Caco-2 (cell line): ENCODE measurements at regions of chr10 and their contacts with region 1.

Region 1: GRCh38 chr10:5684318-5684970 is at the start of gene TASOR2:
- DNase-seq: peak; percentile 100
- H3K4me3 ChIP-seq: peak within 1 kb of the TSS; percentile 97
- H3K4me3 Mint-ChIP-seq: peak within 1 kb of the TSS; percentile 86
- H3K27ac Mint-ChIP-seq: peak within 1 kb of the TSS; percentile 96
- H3K4me1 ChIP-seq: peaks cover 12% of the 10 kb centered on the region
- H3K4me1 Mint-ChIP-seq: peaks cover 12% of the 10 kb centered on the region
- H3K27me3 ChIP-seq: no peaks in the 10 kb centered on the region
- H3K27me3 Mint-ChIP-seq: no peaks in the 10 kb centered on the region
- CTCF ChIP-seq: no peak
- total RNA-seq, gene TASOR2: 102 and 108 TPM in 2 replicates

Region 2: GRCh38 chr10:5551531-5552375 is 132.7 kb before region 1 on chr10:
- CTCF ChIA-PET with region 1: no interaction called
- POLR2A ChIA-PET with region 1: no interaction called
- intact Hi-C with region 1: no loop called
- DNase-seq: peak in 1 of 2 experiments; percentile 44
- H3K4me3 ChIP-seq: no peak overlapping the region
- H3K4me3 Mint-ChIP-seq: no peak overlapping the region
- H3K27ac Mint-ChIP-seq: no peak overlapping the region
- H3K4me1 ChIP-seq: peaks cover 67% of the 10 kb centered on the region
- H3K4me1 Mint-ChIP-seq: peaks cover 28% of the 10 kb centered on the region
- H3K27me3 ChIP-seq: no peaks in the 10 kb centered on the region
- H3K27me3 Mint-ChIP-seq: no peaks in the 10 kb centered on the region
- CTCF ChIP-seq: no peak

Region 3: GRCh38 chr10:5629303-5630111 is 54.9 kb before region 1 on chr10:
- CTCF ChIA-PET with region 1: interaction called, 7 read pairs
- POLR2A ChIA-PET with region 1: no interaction called
- intact Hi-C with region 1: loop called (anchors 1 kb)
- DNase-seq: peak; percentile 86 to 92
- H3K4me3 ChIP-seq: no peak overlapping the region
- H3K4me3 Mint-ChIP-seq: no peak overlapping the region
- H3K27ac Mint-ChIP-seq: no peak overlapping the region
- H3K4me1 ChIP-seq: peaks cover 21% of the 10 kb centered on the region
- H3K4me1 Mint-ChIP-seq: peaks cover 25% of the 10 kb centered on the region
- H3K27me3 ChIP-seq: no peaks in the 10 kb centered on the region
- H3K27me3 Mint-ChIP-seq: no peaks in the 10 kb centered on the region
- CTCF ChIP-seq: peak; percentile 97 to 98

Region 4: GRCh38 chr10:5666008-5666829 is 18.2 kb before region 1 on chr10 and contains the start of gene ASB13:
- CTCF ChIA-PET with region 1: no interaction called
- POLR2A ChIA-PET with region 1: no interaction called
- intact Hi-C with region 1: loop called (anchors 2 kb)
- DNase-seq: peak; percentile 77 to 89
- H3K4me3 ChIP-seq: peak within 1 kb of the TSS; percentile 100
- H3K4me3 Mint-ChIP-seq: peak within 1 kb of the TSS; percentile 86
- H3K27ac Mint-ChIP-seq: peak within 1 kb of the TSS; percentile 72
- H3K4me1 ChIP-seq: peaks cover 21% of the 10 kb centered on the region
- H3K4me1 Mint-ChIP-seq: peaks cover 6% of the 10 kb centered on the region
- H3K27me3 ChIP-seq: no peaks in the 10 kb centered on the region
- H3K27me3 Mint-ChIP-seq: no peaks in the 10 kb centered on the region
- CTCF ChIP-seq: peak in 1 of 2 experiments; percentile 33
- total RNA-seq, gene ASB13: 37.0 and 44.8 TPM in 2 replicates

Region 5: DNA sequence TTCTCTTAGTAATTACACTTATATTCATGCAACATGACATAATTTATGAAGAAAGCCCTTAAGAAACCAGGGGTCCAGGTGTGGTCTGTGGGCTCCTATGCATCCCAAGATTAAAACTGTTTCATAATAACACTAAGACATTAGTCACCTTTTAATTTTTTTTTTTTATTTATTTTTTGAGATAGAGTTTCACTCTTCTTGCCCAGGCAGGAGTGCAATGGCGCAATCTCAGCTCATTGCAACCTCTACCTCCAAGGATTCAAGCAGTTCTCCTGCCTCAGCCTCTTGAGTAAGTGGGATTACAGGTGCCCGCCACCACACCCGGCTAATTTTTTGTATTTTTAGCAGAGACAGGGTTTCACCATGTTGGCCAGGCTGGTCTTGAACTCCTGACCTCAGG is 116.3 kb after region 1 on chr10:
- CTCF ChIA-PET with region 1: no interaction called
- POLR2A ChIA-PET with region 1: no interaction called
- intact Hi-C with region 1: no loop called
- DNase-seq: no peak
- H3K4me3 ChIP-seq: no peak overlapping the region
- H3K4me3 Mint-ChIP-seq: no peak overlapping the region
- H3K27ac Mint-ChIP-seq: no peak overlapping the region
- H3K4me1 ChIP-seq: no peaks in the 10 kb centered on the region
- H3K4me1 Mint-ChIP-seq: peaks cover 6% of the 10 kb centered on the region
- H3K27me3 ChIP-seq: no peaks in the 10 kb centered on the region
- H3K27me3 Mint-ChIP-seq: no peaks in the 10 kb centered on the region
- CTCF ChIP-seq: no peak

Region 6: DNA sequence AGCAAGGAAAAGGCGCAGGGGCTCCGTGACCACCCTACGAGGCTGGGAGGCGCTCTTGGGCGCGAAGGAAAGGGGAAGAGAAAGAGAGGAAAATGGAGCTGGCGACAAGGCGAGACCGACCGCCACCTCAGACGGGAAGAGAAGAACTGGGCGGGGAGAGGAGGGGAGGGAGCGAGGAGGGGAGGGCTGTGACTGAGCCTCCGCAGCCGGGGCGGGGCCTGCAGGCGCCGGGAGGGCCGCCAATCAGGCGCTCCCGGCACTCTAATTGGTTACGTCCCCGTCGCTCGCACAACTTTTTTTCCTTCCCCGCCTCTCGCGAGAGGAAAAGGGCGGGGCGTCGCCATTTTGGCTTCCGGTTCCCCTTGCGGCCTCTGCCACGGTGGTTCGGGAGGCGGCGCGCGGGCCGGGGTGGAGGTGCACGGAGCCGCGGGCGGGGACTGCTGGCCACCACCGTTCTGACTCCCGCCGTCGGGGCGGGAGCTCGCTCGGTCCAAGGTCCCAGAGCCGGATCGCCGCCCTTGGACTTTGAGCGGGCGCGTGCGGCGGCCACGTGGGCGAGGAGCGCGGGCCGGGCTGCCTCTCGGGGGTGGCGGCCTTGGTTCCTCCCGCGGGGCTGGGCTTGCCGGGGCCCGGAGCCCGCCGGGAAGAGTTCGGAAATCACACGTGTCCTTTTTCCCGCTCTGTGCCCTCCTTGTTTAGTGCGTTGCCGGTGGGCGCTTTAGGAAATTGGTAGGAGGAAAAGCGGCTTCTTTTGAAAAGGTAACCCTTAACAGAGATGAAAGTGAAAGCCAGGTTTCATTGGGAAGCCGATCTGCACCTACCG is 129.1 kb after region 1 on chr10 and contains the start of gene GDI2:
- CTCF ChIA-PET with region 1: no interaction called
- POLR2A ChIA-PET with region 1: interaction called, 5 read pairs
- intact Hi-C with region 1: loop called (anchors 2 kb)
- DNase-seq: peak; percentile 99 to 100
- H3K4me3 ChIP-seq: peak within 1 kb of the TSS; percentile 90
- H3K4me3 Mint-ChIP-seq: peak within 1 kb of the TSS; percentile 91
- H3K27ac Mint-ChIP-seq: peak within 1 kb of the TSS; percentile 87
- H3K4me1 ChIP-seq: peaks cover 35% of the 10 kb centered on the region
- H3K4me1 Mint-ChIP-seq: peaks cover 28% of the 10 kb centered on the region
- H3K27me3 ChIP-seq: no peaks in the 10 kb centered on the region
- H3K27me3 Mint-ChIP-seq: no peaks in the 10 kb centered on the region
- CTCF ChIP-seq: no peak
- total RNA-seq, gene GDI2: 436 and 446 TPM in 2 replicates

Region 7: GRCh38 chr10:5889624-5890451 is 205.4 kb after region 1 on chr10 and contains the starts of genes ANKRD16 and FBH1:
- CTCF ChIA-PET with region 1: no interaction called
- POLR2A ChIA-PET with region 1: interaction called, 6 read pairs
- intact Hi-C with region 1: loop called (anchors 2 kb)
- DNase-seq: peak; percentile 99 to 100
- H3K4me3 ChIP-seq: peak within 1 kb of the TSS; percentile 93
- H3K4me3 Mint-ChIP-seq: peak within 1 kb of the TSS; percentile 85
- H3K27ac Mint-ChIP-seq: peak within 1 kb of the TSS; percentile 83
- H3K4me1 ChIP-seq: peaks cover 7% of the 10 kb centered on the region; the same call in 1 of the 2 replicates
- H3K4me1 Mint-ChIP-seq: peaks cover 27% of the 10 kb centered on the region
- H3K27me3 ChIP-seq: no peaks in the 10 kb centered on the region
- H3K27me3 Mint-ChIP-seq: no peaks in the 10 kb centered on the region
- CTCF ChIP-seq: no peak
- total RNA-seq, gene ANKRD16: 17.4 and 20.2 TPM in 2 replicates
- total RNA-seq, gene FBH1: 83.3 and 96.1 TPM in 2 replicates